Head of caudate nucleus (tissue), 42 donors: ENCODE measurements at regions of chr12 and their contacts with region 1.

Region 1: GRCh38 chr12:66693901-66694675 is 15.2 kb upstream of the GRIP1 start:
- DNase-seq: peak in 24 of 42 donors; percentile 4 to 77 (median 37)

Region 2: DNA sequence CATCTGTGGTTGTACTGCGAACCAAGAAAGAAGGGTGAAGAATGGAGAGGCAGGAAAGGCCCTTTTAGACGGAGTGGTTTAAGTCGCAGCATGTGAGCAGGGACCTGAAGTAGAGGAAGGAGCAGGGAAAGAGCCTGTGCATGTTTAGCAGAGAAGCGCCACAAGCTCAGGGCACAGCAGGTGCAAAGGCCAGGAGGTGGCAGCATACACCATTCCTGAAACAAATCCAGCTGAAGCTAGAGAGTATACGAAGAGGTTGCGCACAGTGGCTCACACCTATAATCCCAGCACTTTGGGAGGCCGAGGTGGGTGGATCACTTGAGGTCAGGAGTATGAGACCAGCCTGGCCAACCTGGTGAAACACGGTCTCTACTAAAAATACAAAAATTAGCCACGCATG is 341.9 kb before region 1 on chr12:
- intact Hi-C with region 1: loop called (anchors 10 kb)
- DNase-seq: peak in 38 of 42 donors; percentile 24 to 69 (median 46)

Region 3: GRCh38 chr12:66744956-66745383 is 50.9 kb after region 1 on chr12:
- intact Hi-C with region 1: no loop called
- DNase-seq: no peak

Region 4: DNA sequence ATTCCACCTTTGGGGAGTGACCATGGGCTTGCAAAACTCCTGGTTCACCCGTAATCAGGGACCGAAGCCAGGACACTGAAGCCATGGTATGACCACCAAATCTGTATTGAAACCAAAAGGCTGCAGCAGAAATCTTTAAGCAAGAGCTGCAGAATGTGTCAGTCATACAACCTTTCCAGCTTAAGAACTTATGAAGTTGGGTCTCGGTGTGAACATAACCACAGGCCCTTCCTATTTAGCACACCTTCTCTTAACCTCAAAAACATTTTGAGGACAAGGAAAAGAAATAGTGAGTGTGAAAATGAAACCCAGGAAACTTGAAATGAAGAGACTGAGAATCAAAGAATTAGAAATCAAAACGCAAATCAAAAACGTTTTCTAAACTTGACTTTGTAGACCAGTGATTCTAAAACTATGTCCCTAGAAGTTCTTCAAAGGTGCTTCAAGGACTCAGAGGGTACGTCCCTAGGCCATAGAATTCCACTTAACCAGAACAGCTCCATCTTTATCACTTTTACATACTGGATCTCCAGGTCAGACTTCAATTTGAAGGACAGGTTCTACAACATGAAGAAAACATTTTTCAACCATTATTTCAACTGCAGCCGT is 216.4 kb after region 1 on chr12:
- intact Hi-C with region 1: no loop called
- DNase-seq: no peak